ENCODE measurements at regions of chr6 and their contacts with region 1.

Region 1: GRCh38 chr6:2971420-2972218 is at the start of gene SERPINB6:
- DNase-seq: peak in 1 of 2 donors; percentile 90
- H3K4me3 ChIP-seq: peak within 1 kb of the TSS; percentile 84 to 86
- H3K27ac ChIP-seq: peak within 1 kb of the TSS; percentile 99
- H3K4me1 ChIP-seq: peaks cover 0 to 11% of the 10 kb centered on the region in 2 donors
- H3K27me3 ChIP-seq: no peaks in the 10 kb centered on the region
- CTCF ChIP-seq: no peak
- total RNA-seq, gene SERPINB6: 222 TPM

Region 2: DNA sequence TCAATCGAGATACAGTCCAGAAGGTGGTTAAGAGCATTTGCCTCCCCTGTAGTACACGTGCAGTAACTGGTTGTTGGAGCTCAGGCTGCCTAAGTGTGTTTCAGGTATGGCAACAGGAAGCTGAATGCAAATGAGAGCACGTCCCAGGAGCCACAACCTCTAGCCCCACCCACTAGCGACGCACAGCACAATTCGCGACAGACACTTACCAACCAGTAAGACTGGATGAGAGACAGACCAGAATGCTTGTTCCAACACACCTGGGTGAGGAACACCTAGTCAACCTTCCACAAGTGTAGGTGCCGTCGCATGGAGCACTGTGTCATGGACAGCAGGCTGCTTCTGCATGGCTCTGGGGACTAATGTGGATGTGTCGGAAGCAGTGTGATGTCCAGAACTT is 122.8 kb before region 1 on chr6:
- intact Hi-C with region 1: loop called (anchors 5 kb)
- DNase-seq: peak in 1 of 2 donors; percentile 55
- H3K4me3 ChIP-seq: no peak overlapping the region
- H3K27ac ChIP-seq: no peak overlapping the region
- H3K4me1 ChIP-seq: peaks cover 3 to 10% of the 10 kb centered on the region in 2 donors
- H3K27me3 ChIP-seq: no peaks in the 10 kb centered on the region
- CTCF ChIP-seq: no peak

Region 3: GRCh38 chr6:2911171-2911570 is 60.4 kb before region 1 on chr6:
- intact Hi-C with region 1: no loop called
- DNase-seq: peak in 1 of 2 donors; percentile 15
- H3K4me3 ChIP-seq: no peak overlapping the region
- H3K27ac ChIP-seq: no peak overlapping the region
- H3K4me1 ChIP-seq: no peaks in the 10 kb centered on the region
- H3K27me3 ChIP-seq: no peaks in the 10 kb centered on the region
- CTCF ChIP-seq: no peak